ENCODE measurements at regions of chr16 and their contacts with region 1.

Region 1: GRCh38 chr16:29973384-29974246 is at the start of gene TAOK2:
- DNase-seq: peak; percentile 98
- ATAC-seq: peak; percentile 99
- H3K4me3 Mint-ChIP-seq: peak within 1 kb of the TSS; percentile 85
- H3K27ac Mint-ChIP-seq: peak within 1 kb of the TSS; percentile 92
- H3K4me1 Mint-ChIP-seq: peaks cover 40% of the 10 kb centered on the region
- H3K27me3 Mint-ChIP-seq: no peaks in the 10 kb centered on the region
- total RNA-seq, gene TAOK2: 48.9 to 49.8 TPM

Region 2: GRCh38 chr16:29926005-29926710 is 47.5 kb before region 1 on chr16 and contains the start of gene KCTD13:
- CTCF ChIA-PET with region 1: no interaction called
- POLR2A ChIA-PET with region 1: interaction called, 11 read pairs
- DNase-seq: peak; percentile 88
- ATAC-seq: peak; percentile 94
- H3K4me3 Mint-ChIP-seq: peak within 1 kb of the TSS; percentile 85
- H3K27ac Mint-ChIP-seq: peak within 1 kb of the TSS; percentile 93
- H3K4me1 Mint-ChIP-seq: peaks cover 29% of the 10 kb centered on the region
- H3K27me3 Mint-ChIP-seq: peaks cover 2% of the 10 kb centered on the region
- total RNA-seq, gene KCTD13: 33.8 to 35.5 TPM

Region 3: GRCh38 chr16:29961479-29962343 is 11.9 kb before region 1 on chr16 and contains the start of gene TMEM219:
- CTCF ChIA-PET with region 1: interaction called, 41 read pairs
- POLR2A ChIA-PET with region 1: interaction called, 42 read pairs
- DNase-seq: peak; percentile 94
- ATAC-seq: peak; percentile 95
- H3K4me3 Mint-ChIP-seq: peak within 1 kb of the TSS; percentile 82
- H3K27ac Mint-ChIP-seq: peak within 1 kb of the TSS; percentile 84
- H3K4me1 Mint-ChIP-seq: peaks cover 20% of the 10 kb centered on the region
- H3K27me3 Mint-ChIP-seq: no peaks in the 10 kb centered on the region
- total RNA-seq, gene TMEM219: 57.8 to 61.0 TPM

Region 4: DNA sequence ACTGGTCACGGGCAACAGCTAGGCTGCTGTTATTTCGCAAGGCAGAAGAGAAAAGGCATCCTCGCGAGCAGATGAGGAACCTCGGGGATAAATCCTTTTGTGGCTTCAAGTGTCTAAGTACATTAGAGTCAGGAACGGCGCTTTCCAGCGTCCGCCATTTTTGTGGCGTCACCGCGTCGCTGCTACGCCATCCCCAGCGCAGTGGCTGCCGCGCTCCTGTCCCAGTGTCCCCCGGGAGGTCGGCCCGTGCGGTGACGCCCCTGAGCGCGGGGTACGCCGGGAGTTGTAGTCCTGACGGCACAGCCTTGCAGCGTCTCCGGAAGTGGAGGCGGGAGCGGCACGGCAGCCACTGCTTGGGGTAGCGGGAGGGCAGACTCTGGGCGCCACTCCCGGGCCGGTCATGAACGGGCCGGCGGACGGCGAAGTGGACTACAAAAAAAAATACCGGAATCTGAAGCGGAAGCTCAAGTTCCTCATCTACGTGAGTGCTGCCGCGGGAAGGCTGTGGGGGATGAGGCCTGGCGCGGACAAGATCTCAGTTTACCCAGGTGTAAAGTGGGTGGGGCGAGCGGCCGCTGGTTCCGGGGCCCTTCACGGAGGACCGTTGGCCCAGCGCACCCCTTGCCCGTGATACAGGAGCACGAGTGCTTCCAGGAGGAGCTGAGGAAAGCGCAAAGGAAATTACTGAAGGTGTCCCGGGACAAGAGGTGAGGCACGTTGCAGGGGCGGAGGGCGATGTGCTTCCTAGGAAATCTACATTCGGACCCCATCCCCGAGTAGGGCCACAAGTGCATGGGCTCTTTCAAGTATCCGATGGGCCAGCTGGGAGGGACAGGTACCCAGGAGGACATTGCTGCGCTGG is 22.5 kb after region 1 on chr16 and contains the start of gene INO80E:
- CTCF ChIA-PET with region 1: interaction called, 11 read pairs
- POLR2A ChIA-PET with region 1: interaction called, 48 read pairs
- DNase-seq: peak; percentile 100
- ATAC-seq: peak; percentile 94
- H3K4me3 Mint-ChIP-seq: peak within 1 kb of the TSS; percentile 99
- H3K27ac Mint-ChIP-seq: peak within 1 kb of the TSS; percentile 96
- H3K4me1 Mint-ChIP-seq: peaks cover 33% of the 10 kb centered on the region
- H3K27me3 Mint-ChIP-seq: no peaks in the 10 kb centered on the region
- total RNA-seq, gene INO80E: 104 to 117 TPM

Region 5: GRCh38 chr16:30032083-30032819 is 58.6 kb after region 1 on chr16:
- CTCF ChIA-PET with region 1: interaction called, 10 read pairs
- POLR2A ChIA-PET with region 1: no interaction called
- DNase-seq: peak; percentile 81
- ATAC-seq: peak; percentile 66
- H3K4me3 Mint-ChIP-seq: no peak overlapping the region
- H3K27ac Mint-ChIP-seq: no peak overlapping the region
- H3K4me1 Mint-ChIP-seq: peaks cover 15% of the 10 kb centered on the region
- H3K27me3 Mint-ChIP-seq: peaks cover 44% of the 10 kb centered on the region

Measured in activated CD8-positive, alpha-beta T cell treated with anti-CD3 and anti-CD28 coated beads, Interleukin-2, amount 10 ng/mL, durations not matched to agents 7 days and 5 days (primary cell).